GM18951 (cell line): ENCODE measurements at regions of chr4 and their contacts with region 1.

Region 1: GRCh38 chr4:149980941-149981340 is 97.3 kb upstream of the DCLK2 start:
- POLR2A ChIP-seq: no peak

Region 2: GRCh38 chr4:149202117-149202516 is 778.8 kb before region 1 on chr4:
- in situ Hi-C with region 1: no loop called
- POLR2A ChIP-seq: no peak

Region 3: GRCh38 chr4:149426461-149426860 is 554.5 kb before region 1 on chr4:
- in situ Hi-C with region 1: no loop called
- POLR2A ChIP-seq: no peak

Region 4: DNA sequence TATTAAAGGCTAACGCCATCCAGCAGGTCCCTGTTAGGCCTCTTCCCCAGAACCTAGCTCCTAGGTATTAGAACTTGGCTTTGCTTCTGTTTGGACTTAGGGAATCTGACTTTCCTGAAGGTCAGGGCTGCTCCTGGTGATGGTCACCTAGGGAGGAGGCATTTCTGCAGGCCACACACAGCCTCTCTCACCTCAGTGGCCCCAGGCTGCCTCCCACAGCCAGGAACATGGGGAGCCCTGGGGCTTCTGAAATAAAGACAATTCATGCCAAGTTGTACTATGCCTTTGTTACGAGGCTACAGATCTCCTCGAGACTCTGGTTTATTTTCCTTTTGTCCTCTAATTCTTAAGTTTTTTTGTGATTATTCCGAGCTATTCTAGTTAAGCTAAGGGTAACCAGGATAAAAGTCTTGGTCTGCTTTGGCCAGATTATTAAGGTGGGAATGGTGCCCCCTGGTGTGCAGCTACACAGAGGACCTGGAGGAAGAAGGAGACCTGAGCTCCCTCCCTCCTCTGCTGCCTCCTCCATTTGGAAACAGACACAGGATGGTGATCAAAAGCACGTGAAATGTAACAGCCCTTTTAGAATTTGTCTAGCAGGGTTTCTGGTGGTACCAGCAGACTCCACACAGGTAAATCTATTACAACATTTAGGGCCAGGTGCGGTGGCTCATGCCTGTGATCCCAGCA is 228.3 kb after region 1 on chr4:
- in situ Hi-C with region 1: loop called (anchors 25 kb)
- POLR2A ChIP-seq: no peak